ENCODE measurements at regions of chr12 and their contacts with region 1.

Region 1: DNA sequence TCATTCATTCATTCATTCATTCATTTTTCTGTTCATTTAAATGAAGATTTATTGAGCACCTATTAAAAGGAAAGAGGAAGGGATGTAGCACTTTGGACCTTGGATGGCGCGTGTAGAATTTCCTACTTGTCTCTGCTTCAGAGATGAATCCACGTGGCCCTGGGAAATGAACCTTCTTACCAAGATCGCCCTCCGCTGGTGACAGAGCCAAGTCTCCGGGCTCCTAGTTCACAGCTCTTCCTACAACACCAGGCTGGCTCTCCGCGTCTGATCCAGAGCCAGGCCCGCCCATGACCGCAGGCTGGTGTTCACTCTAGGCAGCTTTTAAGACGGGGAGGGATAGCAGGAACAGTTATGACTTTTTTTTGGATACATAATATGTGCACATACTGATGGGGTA is 70.9 kb upstream of the PIWIL1 start:
- DNase-seq: no peak
- H3K4me3 ChIP-seq: no peak overlapping the region
- H3K27ac ChIP-seq: no peak overlapping the region
- H3K4me1 ChIP-seq: no peaks in the 10 kb centered on the region
- H3K27me3 ChIP-seq: no peaks in the 10 kb centered on the region
- CTCF ChIP-seq: no peak

Region 2: DNA sequence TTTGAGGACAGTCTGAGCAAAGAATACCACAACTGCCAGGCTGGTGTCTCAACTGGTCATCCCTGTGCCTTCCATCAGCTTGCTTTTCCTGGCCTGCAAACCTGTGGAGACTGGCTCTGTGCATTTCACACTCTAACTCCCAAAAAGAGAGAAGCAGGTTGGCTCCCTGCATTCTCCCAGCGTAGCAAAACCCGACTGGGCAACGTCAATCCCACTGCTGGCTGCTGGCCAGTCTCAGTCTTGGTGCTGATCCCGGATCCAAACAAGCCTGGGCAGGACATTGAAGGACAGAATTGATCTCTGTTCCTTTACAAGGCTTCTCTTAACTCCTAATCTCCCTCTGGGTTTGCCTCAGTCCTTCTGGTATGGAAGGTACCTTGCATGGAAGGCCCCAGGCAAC is 39.1 kb before region 1 on chr12:
- CTCF ChIA-PET with region 1: no interaction called
- dilution Hi-C with region 1: loop called (anchors 5 kb)
- in situ Hi-C with region 1: no loop called
- intact Hi-C with region 1: no loop called
- DNase-seq: no peak
- H3K4me3 ChIP-seq: no peak overlapping the region
- H3K27ac ChIP-seq: no peak overlapping the region
- H3K4me1 ChIP-seq: no peaks in the 10 kb centered on the region
- H3K27me3 ChIP-seq: no peaks in the 10 kb centered on the region
- CTCF ChIP-seq: no peak

Measured in mammary epithelial cell (primary cell).